Adrenal gland (tissue), 19 donors: ENCODE measurements at regions of chr22 and their contacts with region 1.

Region 1: GRCh38 chr22:20418211-20418788 is 19.3 kb downstream of the SCARF2 start:
- DNase-seq: peak; percentile 80 to 90 (median 84)
- H3K4me3 ChIP-seq: peak overlapping the region in 2 of 4 donors; percentile 30 to 44
- H3K27ac ChIP-seq: peak overlapping the region in 1 of 5 donors; percentile 59
- H3K4me1 ChIP-seq: peaks cover 0 to 3% of the 10 kb centered on the region in 2 donors
- H3K27me3 ChIP-seq: no peaks in the 10 kb centered on the region
- CTCF ChIP-seq: peak; percentile 81 to 94 (median 90)
- POLR2A ChIP-seq: no peak

Region 2: GRCh38 chr22:20354238-20354975 is 63.9 kb before region 1 on chr22:
- intact Hi-C with region 1: no loop called
- DNase-seq: no peak
- H3K4me3 ChIP-seq: no peak overlapping the region
- H3K27ac ChIP-seq: no peak overlapping the region
- H3K4me1 ChIP-seq: no peaks in the 10 kb centered on the region
- H3K27me3 ChIP-seq: no peaks in the 10 kb centered on the region
- CTCF ChIP-seq: no peak
- POLR2A ChIP-seq: no peak

Region 3: DNA sequence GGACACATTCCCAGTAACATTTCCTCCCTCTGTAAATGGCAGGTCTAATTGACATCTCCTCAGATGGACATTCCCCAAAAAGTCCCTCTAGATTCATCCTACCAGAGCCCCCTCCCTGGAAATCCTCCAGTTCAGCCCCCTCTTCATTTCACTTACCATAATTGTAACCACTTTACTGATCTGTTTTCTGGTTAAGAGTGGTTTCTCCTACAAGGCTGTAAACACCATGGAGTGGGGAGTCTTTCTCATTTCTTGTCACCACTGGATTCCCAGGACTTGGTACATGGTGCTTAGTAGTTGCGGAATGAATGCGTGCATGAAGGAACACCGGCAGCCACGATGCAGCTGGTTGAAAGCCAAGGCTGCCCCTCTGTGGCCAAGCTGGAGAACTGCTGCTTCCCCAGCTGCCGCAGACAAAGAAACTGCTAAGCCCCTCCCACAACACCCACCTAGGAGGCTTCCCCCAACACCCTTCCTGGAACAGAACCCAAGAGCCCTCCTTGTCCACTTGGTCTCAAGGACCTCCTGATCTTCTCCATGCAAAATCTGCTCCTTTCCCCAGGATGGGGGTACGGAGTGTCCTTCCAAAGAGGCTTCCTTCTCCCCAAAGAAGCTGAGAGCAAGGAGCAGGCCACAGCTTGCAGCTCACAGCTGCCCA is 37.9 kb after region 1 on chr22:
- intact Hi-C with region 1: loop called (anchors 2 to 5 kb)
- DNase-seq: peak; percentile 64 to 86 (median 81)
- H3K4me3 ChIP-seq: no peak overlapping the region
- H3K27ac ChIP-seq: no peak overlapping the region
- H3K4me1 ChIP-seq: no peaks in the 10 kb centered on the region
- H3K27me3 ChIP-seq: no peaks in the 10 kb centered on the region
- CTCF ChIP-seq: peak; percentile 67 to 91 (median 86)
- POLR2A ChIP-seq: no peak

Region 4: DNA sequence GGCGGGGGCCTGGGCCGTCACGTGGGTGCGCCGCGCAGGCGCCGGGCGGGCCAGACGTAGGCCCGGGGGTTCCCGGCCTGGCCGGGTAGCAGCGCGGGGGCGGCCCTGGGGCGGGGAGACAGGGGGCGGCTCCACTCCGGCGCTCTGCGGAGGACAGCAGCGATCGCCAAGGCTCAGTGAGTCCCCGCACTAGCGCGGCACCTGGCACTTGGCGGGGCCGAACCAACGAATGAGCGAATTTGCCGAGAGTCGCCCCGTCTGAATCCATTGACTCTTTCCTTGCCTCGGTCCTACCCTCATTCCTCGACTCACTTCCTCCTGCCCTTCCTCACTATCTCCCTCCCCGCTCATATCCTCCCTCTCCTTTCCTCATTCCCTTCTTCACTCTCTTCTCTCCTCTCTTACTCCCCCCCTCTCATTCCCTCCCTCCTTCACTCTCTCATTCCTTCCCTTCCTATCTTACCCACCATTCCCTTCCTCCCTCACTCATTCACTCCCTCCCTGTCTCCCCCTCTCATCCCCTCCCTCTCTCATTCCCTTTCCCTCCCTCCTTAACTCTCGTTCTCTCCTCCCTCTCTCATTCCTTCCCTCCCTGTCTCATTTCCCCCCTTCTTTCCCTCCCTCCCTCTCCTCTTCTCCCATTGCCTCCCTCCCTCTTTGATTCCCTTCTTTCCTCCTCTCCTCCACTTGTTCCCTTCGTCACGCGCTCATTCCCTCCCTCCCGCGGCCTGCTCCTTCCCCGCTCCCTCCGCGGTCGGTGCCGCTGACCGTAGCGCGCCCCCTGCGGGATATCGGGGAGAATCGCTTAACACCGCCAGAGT is 77.8 kb after region 1 on chr22:
- intact Hi-C with region 1: loop called in 1 of 2 experiments (anchors 2 kb)
- DNase-seq: peak; percentile 89 to 93 (median 92)
- H3K4me3 ChIP-seq: peak overlapping the region in 2 of 4 donors; percentile 36 to 94
- H3K27ac ChIP-seq: peak overlapping the region; percentile 19 to 97 (median 90)
- H3K4me1 ChIP-seq: peaks cover 4 to 17% of the 10 kb centered on the region in 2 donors
- H3K27me3 ChIP-seq: no peaks in the 10 kb centered on the region
- CTCF ChIP-seq: peak; percentile 68 to 95 (median 90)
- POLR2A ChIP-seq: peak; percentile 53 to 87